ENCODE measurements at regions of chrX and their contacts with region 1.

Region 1: DNA sequence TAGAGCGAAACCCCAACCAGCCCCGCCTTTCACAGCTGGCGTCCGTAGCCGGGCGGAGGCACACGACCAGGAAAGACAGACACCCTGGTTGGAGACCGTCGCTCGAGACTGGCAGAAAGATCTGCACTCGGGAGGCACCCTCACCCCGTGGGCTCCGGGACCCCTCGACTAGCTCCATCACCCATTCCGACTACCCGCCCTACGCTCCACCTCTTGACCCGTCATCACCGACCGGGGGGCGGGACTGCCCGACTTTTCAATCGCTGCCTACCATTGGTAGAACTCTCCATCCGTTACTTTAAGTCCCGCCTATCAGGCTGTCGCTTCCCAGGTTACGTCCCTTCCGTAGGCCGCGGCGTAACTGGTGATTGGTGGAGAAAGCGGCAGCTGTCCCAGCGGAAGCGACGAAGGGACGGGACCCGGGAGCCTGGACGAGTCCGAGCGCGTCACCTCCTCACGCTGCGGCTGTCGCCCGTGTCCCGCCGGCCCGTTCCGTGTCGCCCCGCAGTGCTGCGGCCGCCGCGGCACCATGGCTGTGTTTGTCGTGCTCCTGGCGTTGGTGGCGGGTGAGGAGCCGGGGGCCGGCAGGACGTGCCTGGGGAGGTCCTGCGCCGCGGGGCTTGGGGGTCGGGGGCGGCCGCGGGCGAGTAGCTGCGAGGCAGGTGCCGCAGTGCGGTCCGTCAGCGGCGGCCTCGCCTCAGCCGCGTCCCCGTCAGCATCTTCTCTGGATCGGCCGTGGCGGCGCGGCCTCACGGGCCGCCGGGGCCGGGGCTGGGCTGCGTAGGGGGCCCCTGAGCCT is at the start of gene ATP6AP2:
- DNase-seq: peak; percentile 93
- ATAC-seq: peak; percentile 98
- H3K4me3 Mint-ChIP-seq: peak within 1 kb of the TSS; percentile 83
- H3K27ac Mint-ChIP-seq: peak within 1 kb of the TSS; percentile 87
- H3K4me1 Mint-ChIP-seq: peaks cover 28% of the 10 kb centered on the region
- H3K27me3 Mint-ChIP-seq: no peaks in the 10 kb centered on the region
- CTCF ChIP-seq: no peak
- total RNA-seq, gene ATP6AP2: 42.9 to 45.5 TPM

Region 2: DNA sequence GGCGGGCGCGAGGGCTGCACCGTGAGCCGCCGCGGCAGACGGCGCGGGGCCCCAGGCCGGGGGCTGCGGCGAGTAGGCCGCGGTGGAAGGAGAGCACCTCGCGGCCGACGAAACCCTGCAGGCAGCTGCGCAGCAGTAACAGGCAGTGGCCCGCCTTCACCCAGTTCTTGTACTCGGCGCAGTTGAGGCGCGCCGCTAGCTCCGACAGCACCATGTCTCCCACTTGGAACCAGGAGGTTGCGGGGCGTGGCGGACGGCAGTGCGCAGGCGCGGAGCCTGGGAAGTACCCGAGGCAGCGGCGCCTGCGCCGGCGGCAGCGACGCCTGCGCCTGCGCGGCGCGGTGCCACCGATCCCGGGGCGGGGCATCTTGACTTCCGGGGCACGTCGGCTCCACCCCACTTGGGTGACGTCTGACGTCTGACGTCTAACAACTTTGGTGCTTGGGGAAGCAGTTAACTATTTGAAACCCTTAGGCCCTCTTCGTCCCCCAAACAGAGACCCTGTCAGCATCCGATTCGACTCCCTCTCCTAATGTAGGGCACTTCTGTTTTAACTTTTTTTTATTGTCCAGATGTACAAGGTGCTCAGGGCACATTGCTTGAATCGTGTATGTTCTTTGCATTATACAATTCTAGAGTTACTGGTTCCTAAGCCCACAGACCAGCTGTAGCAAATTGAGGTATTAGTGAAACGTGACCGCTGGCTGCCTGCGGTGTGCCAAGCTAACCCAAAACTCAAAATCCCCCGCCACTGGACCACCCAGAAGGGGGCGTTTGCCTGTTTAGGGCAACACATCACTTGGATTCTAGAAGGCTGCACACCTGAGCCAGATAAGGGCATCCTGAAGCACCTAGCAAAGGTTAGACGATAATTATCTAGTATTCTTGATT is 66.8 kb after region 1 on chrX and contains the start of gene CXorf38:
- CTCF ChIA-PET with region 1: interaction called, 5 read pairs
- POLR2A ChIA-PET with region 1: no interaction called
- intact Hi-C with region 1: loop called (anchors 10 kb)
- DNase-seq: peak; percentile 93
- ATAC-seq: peak; percentile 80
- H3K4me3 Mint-ChIP-seq: peak within 1 kb of the TSS; percentile 98
- H3K27ac Mint-ChIP-seq: peak within 1 kb of the TSS; percentile 97
- H3K4me1 Mint-ChIP-seq: peaks cover 16% of the 10 kb centered on the region
- H3K27me3 Mint-ChIP-seq: no peaks in the 10 kb centered on the region
- CTCF ChIP-seq: no peak
- total RNA-seq, gene CXorf38: 21.2 to 22.5 TPM

Measured in activated CD8-positive, alpha-beta T cell treated with anti-CD3 and anti-CD28 coated beads for 36 hours (primary cell).